ENCODE measurements at regions of chr15 and their contacts with region 1.

Region 1: DNA sequence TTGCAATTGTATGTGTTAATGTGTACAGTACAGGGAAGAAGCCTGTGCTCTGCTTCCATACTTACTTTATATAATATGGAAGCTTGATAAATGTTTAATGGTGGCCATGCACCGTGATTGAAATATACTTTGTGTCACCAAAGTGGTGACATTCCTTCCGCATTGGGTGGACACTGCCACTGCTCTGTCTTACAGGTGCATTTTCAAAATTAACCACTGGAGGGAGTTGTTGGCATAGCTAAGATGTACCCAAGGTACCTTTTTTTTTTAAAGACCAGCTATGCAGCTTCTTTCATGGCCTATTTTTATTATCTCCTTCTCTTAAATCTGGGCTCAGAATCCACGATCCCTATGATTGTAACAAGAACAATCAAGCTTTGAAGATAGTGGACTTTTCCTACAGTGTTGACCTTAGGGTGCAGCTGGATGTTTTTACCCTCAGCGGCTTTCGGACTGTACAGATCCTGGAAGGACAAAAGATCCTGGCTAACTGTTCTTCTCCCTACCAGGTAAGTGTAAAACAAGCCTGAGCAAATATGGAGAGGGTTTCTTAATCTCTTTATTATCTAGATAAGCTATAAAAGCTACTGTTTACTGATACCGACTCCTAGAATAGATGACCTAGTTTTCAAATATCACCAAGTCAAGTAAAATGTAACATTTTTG is 21.6 kb upstream of the PAK6 start:
- DNase-seq: peak; percentile 32
- H3K4me3 Mint-ChIP-seq: no peak overlapping the region
- H3K27ac Mint-ChIP-seq: no peak overlapping the region
- H3K4me1 Mint-ChIP-seq: no peaks in the 10 kb centered on the region
- H3K27me3 Mint-ChIP-seq: no peaks in the 10 kb centered on the region

Region 2: GRCh38 chr15:40044717-40045571 is 172.3 kb before region 1 on chr15:
- CTCF ChIA-PET with region 1: interaction called, 29 read pairs
- POLR2A ChIA-PET with region 1: interaction called, 8 read pairs
- DNase-seq: peak; percentile 88
- H3K4me3 Mint-ChIP-seq: no peak overlapping the region
- H3K27ac Mint-ChIP-seq: peak overlapping the region; percentile 47
- H3K4me1 Mint-ChIP-seq: peaks cover 77% of the 10 kb centered on the region
- H3K27me3 Mint-ChIP-seq: no peaks in the 10 kb centered on the region

Region 3: DNA sequence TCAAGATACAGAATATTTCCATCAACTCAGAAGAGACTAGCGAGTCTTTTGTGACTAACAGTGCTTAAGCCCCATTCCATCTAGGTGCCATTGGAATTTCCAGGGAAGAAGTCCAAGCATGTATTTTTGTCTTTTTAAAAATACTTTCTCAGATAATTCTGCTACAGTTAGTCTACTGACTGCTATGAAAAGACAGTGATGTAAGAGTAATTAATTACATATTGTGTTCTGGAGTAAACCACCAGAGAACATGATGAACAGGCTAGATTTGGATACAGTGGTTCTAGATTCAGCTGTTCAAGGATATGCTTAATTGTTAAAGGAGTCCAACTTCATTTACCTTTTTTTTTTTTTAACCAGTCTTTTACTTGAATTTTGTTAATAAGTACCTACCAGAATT is 13.2 kb before region 1 on chr15:
- CTCF ChIA-PET with region 1: interaction called, 27 read pairs
- POLR2A ChIA-PET with region 1: no interaction called
- DNase-seq: no peak
- H3K4me3 Mint-ChIP-seq: no peak overlapping the region
- H3K27ac Mint-ChIP-seq: no peak overlapping the region
- H3K4me1 Mint-ChIP-seq: no peaks in the 10 kb centered on the region
- H3K27me3 Mint-ChIP-seq: no peaks in the 10 kb centered on the region

Region 4: DNA sequence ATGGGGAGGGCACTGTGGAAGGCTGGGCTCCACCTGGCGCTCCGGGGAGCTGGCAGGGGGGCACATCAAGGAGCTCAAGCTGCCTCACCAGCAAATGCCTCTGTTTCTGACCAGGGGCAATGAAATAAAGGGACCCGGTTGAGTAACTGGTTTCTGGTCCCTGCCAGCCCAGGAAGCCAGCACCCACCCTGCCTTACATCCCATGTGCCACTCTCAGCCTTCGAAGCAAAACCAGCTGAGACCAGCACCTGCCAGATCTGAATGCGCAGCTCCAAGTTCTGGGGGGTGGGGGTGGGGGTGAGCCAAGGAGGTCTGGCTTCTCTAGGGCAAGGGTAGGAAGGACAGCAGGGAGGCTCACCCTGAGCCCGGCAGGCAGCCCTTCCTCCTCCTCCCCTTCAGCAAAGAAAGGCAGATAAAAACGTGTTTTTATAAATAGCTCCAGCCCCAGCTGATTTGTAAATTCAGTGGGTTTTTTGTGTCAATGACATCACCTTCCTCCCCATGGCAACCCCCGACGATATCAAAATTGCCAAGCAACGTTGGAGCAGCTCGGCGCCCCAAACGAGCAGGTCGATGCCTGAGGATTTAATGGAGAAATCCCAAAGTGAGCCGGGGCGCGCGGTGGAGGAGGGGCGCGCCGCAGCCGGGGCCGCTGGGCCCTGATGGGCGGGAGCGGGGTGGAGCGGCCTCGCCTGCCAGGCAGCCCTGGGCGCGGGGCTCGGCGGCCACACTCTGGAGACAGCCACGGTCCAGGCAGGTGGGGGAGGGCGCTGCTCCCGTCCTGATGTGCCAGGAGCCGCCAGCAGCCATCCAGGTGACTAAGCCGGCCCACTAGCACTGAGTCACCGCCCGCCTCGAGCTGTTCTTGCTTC is 21.5 kb after region 1 on chr15 and contains the start of gene PAK6:
- CTCF ChIA-PET with region 1: interaction called, 10 read pairs
- POLR2A ChIA-PET with region 1: no interaction called
- DNase-seq: no peak
- H3K4me3 Mint-ChIP-seq: no peak within 1 kb of the TSS
- H3K27ac Mint-ChIP-seq: no peak within 1 kb of the TSS
- H3K4me1 Mint-ChIP-seq: peaks cover 11% of the 10 kb centered on the region
- H3K27me3 Mint-ChIP-seq: peaks cover 21% of the 10 kb centered on the region
- total RNA-seq, gene PAK6: 0.20 to 0.65 TPM